CD4-positive, alpha-beta T cell (primary cell): ENCODE measurements at regions of chr15 and their contacts with region 1.

Region 1: GRCh38 chr15:72532991-72533601 is 59.0 kb downstream of the ARIH1 start:
- DNase-seq: peak in 9 of 14 experiments; percentile 4 to 61 (median 21)
- ATAC-seq: no peak
- H3K4me3 ChIP-seq: no peak overlapping the region
- H3K4me3 Mint-ChIP-seq: no peak overlapping the region
- H3K27ac ChIP-seq: no peak overlapping the region
- H3K27ac Mint-ChIP-seq: no peak overlapping the region
- H3K4me1 ChIP-seq: peaks cover 19% of the 10 kb centered on the region
- H3K4me1 Mint-ChIP-seq: peaks cover 90% of the 10 kb centered on the region
- H3K27me3 ChIP-seq: no peaks in the 10 kb centered on the region
- H3K27me3 Mint-ChIP-seq: no peaks in the 10 kb centered on the region
- CTCF ChIP-seq: peak; percentile 77

Region 2: GRCh38 chr15:72199711-72200212 is 333.3 kb before region 1 on chr15:
- CTCF ChIA-PET with region 1: no interaction called
- POLR2A ChIA-PET with region 1: no interaction called
- intact Hi-C with region 1: loop called in 1 of 2 experiments (anchors 10 kb)
- DNase-seq: peak; percentile 61 to 86 (median 70)
- ATAC-seq: peak; percentile 87
- H3K4me3 ChIP-seq: no peak overlapping the region
- H3K4me3 Mint-ChIP-seq: peak overlapping the region; percentile 4
- H3K27ac ChIP-seq: no peak overlapping the region
- H3K27ac Mint-ChIP-seq: no peak overlapping the region
- H3K4me1 ChIP-seq: peaks cover 15% of the 10 kb centered on the region
- H3K4me1 Mint-ChIP-seq: peaks cover 9% of the 10 kb centered on the region
- H3K27me3 ChIP-seq: peaks cover 11 to 13% of the 10 kb centered on the region in 2 experiments
- H3K27me3 Mint-ChIP-seq: peaks cover 17% of the 10 kb centered on the region
- CTCF ChIP-seq: peak; percentile 91

Region 3: DNA sequence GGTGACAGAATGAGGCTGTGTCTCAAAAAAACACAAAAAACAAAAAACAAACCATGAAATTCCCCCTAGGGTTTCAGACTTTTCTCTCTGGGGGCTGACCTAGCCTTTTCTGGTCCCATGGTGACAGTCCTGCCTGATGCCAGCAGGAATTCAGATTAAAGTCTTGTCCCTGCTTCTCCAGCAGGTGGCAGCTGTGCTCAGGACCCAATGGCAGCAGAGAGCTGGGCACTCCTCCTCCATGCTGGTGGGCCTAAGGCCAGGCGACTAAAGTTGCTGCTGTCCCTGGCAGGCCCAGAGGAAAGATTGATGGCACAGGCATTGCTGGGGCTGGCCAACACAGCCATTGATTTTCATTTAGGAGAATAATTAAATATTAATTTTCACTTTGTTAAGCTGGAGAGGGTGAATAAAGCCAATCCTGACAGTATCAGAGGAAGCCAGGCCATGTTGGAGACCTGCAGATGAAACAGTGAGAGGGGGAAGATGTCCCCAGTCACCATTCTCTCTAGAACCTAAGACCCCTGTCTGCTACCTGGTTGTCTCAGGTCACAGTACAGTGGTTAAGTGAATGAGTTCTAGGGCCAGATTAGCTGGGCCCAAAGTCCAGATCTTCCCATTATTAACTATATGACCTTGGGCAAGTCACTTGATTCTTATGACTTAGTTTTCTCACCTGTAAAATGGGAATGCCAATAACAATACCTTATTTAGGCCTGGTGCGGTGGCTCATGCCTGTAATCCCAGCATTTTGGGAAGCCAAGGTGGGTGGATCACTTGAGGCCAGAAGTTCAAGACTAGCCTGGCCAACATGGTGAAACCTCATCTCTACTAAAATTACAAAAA is 220.3 kb before region 1 on chr15:
- CTCF ChIA-PET with region 1: no interaction called
- POLR2A ChIA-PET with region 1: interaction called, 3 read pairs
- intact Hi-C with region 1: loop called in 1 of 2 experiments (anchors 2 kb)
- DNase-seq: peak; percentile 26 to 78 (median 46)
- ATAC-seq: peak; percentile 95
- H3K4me3 ChIP-seq: no peak overlapping the region
- H3K4me3 Mint-ChIP-seq: no peak overlapping the region
- H3K27ac ChIP-seq: no peak overlapping the region
- H3K27ac Mint-ChIP-seq: no peak overlapping the region
- H3K4me1 ChIP-seq: no peaks in the 10 kb centered on the region
- H3K4me1 Mint-ChIP-seq: peaks cover 4% of the 10 kb centered on the region
- H3K27me3 ChIP-seq: no peaks in the 10 kb centered on the region
- H3K27me3 Mint-ChIP-seq: no peaks in the 10 kb centered on the region
- CTCF ChIP-seq: peak; percentile 71

Region 4: GRCh38 chr15:72616491-72617210 is 83.6 kb after region 1 on chr15:
- CTCF ChIA-PET with region 1: no interaction called
- POLR2A ChIA-PET with region 1: no interaction called
- intact Hi-C with region 1: no loop called
- DNase-seq: no peak
- ATAC-seq: no peak
- H3K4me3 ChIP-seq: no peak overlapping the region
- H3K4me3 Mint-ChIP-seq: no peak overlapping the region
- H3K27ac ChIP-seq: no peak overlapping the region
- H3K27ac Mint-ChIP-seq: no peak overlapping the region
- H3K4me1 ChIP-seq: no peaks in the 10 kb centered on the region
- H3K4me1 Mint-ChIP-seq: peaks cover 6% of the 10 kb centered on the region
- H3K27me3 ChIP-seq: no peaks in the 10 kb centered on the region
- H3K27me3 Mint-ChIP-seq: no peaks in the 10 kb centered on the region
- CTCF ChIP-seq: no peak